A673 (cell line): ENCODE measurements at regions of chr15 and their contacts with region 1.

Region 1: DNA sequence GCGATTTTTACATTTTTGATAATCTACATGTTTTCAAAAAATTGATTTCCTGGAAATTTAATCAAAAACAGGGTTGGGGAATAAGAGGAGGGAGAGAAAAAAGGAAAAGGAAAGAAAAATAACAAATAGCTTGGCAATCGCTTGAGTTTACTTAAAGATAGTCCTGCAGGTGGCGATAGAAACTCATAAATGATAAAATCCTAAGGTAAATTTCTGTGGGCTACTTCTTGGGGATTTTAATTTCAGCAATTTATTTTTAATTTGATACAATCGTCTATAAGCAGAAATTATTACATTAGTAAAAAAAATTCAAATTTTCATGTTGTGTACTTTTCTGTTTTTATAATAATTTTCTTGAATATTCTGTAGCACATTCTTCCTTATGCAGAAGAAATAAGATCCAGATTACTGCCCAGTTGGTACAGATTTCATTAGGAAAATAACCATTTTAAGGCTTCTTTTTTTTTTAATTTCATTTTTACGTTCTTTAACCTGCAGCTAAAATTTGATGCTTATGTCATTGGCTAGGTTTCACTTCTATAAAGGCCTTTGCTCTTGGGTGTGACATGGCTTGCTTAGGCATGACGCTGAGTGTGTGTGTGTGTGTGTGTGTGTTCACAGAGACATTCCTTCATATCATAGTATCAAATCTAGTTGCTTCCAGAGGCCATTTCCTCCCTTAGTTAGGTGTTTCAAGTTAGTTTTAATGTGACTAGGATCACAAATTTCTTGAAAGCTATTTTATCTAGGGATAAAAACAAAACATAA is 181.8 kb downstream of the MCTP2 start:
- DNase-seq: peak; percentile 51
- H3K4me3 ChIP-seq: no peak overlapping the region
- H3K27ac ChIP-seq: no peak overlapping the region
- H3K4me1 ChIP-seq: no peaks in the 10 kb centered on the region
- H3K27me3 ChIP-seq: no peaks in the 10 kb centered on the region
- CTCF ChIP-seq: peak; percentile 66

Region 2: DNA sequence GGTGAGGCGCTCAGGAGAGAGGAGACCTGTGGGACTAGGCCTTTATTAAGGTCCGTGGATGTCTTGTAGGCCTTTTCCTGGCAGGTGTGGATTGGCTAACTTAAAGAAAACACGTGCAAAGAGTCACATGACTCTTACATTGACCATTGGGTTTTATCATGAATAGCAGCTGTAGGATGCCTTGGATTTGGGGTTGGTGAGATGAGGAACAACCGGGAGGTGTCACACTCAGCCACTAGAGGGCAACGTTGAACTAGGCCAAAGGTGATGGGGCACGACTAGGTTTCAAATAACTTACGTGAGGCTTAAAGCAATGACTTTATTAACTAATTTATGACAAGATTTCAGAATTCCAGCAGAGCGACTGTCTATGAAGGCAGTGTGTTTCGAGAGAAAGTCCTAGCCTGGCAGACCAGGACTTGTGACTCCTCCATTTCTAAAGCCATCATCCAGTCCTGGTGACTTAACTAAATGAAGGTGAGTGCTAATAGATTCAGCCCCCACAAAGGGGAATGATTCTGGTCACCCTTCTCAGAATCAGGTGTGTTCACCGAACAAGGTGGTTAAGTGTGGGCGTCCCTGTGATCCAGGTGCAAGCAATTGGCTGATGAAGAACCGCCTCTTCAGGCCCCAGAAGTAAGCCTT is 163.8 kb after region 1 on chr15:
- CTCF ChIA-PET with region 1: no interaction called
- POLR2A ChIA-PET with region 1: no interaction called
- intact Hi-C with region 1: loop called (anchors 5 kb)
- DNase-seq: peak; percentile 63
- H3K4me3 ChIP-seq: no peak overlapping the region
- H3K27ac ChIP-seq: no peak overlapping the region
- H3K4me1 ChIP-seq: no peaks in the 10 kb centered on the region
- H3K27me3 ChIP-seq: no peaks in the 10 kb centered on the region
- CTCF ChIP-seq: peak; percentile 88

Region 3: DNA sequence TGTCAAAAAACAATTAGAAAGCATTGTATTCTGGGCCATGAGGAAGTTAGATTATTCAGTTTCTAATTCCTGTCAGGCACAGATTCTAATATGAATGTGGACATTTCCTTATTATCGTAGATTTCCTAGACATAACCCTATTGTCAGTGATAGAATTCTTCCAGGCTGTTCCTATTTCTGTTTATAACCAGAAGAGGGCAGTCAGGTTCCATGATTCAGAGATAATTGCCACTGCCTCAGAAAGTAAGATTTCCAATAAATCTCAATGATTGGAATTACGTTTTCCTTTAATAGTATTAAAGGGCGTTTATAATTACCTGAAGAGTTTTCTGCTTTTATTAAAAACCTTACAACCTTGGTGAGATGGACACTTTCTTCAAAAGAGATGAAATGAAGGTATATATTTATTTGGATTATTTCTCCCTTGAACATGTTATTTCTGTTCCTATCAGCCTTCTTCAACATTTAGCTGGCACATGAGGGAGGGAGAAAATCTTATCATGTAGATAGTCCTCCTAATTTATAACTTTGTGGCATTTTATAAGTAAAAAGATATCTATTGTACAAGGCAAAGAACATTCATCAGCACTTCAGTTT is 257.4 kb after region 1 on chr15:
- CTCF ChIA-PET with region 1: no interaction called
- POLR2A ChIA-PET with region 1: no interaction called
- intact Hi-C with region 1: loop called (anchors 10 kb)
- DNase-seq: peak; percentile 59
- H3K4me3 ChIP-seq: no peak overlapping the region
- H3K27ac ChIP-seq: no peak overlapping the region
- H3K4me1 ChIP-seq: peaks cover 9% of the 10 kb centered on the region
- H3K27me3 ChIP-seq: no peaks in the 10 kb centered on the region
- CTCF ChIP-seq: peak; percentile 80

Region 4: GRCh38 chr15:95162967-95163531 is 749.9 kb after region 1 on chr15:
- CTCF ChIA-PET with region 1: no interaction called
- POLR2A ChIA-PET with region 1: no interaction called
- intact Hi-C with region 1: no loop called
- DNase-seq: no peak
- H3K4me3 ChIP-seq: no peak overlapping the region
- H3K27ac ChIP-seq: no peak overlapping the region
- H3K4me1 ChIP-seq: no peaks in the 10 kb centered on the region
- H3K27me3 ChIP-seq: no peaks in the 10 kb centered on the region
- CTCF ChIP-seq: no peak